ENCODE measurements at regions of chr12 and their contacts with region 1.

Region 1: DNA sequence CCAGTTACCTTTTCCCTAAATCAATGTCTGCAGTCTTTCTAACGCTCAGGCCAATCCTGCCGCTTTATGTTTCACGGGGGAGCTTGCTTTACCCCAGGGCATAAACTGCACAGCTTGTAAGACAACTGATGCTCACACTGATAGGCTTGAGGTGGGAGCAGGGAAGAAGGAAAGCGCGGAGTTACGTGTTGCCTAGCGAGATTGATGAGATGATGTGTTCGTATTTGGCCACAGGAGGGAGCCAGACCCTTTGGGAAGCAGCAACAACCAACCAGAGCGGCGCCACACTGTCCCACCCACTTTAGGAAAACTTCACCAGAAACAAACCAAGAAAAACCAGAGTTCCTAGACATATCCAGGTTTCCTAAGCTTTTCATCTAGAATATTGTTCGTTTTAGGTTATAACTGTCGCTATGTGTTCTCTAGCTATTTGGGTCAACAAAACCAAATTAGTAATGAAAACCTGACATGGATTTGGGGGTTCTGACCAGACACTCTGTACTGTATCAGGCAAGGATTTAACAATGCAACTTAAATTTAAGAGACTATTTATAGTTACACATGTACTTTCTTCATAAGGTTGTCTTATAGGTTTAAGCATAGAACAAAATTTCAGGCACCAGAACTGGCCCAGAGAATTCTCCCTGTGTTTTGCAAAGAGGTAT is 2.4 kb downstream of the IL26 start:
- DNase-seq: peak; percentile 55 to 81
- ATAC-seq: peak; percentile 91 to 99 (median 98)
- H3K4me3 ChIP-seq: peak overlapping the region in 1 of 10 donors; percentile 13
- H3K27ac ChIP-seq: peak overlapping the region in 1 of 10 donors; percentile 15
- H3K4me1 ChIP-seq: peaks cover 0 to 18% (median 3%) of the 10 kb centered on the region in 9 donors
- H3K27me3 ChIP-seq: peaks cover 0 to 11% (median 0%) of the 10 kb centered on the region in 7 donors
- CTCF ChIP-seq: peak; percentile 73 to 90 (median 85)

Region 2: GRCh38 chr12:68310370-68310769 is 87.2 kb after region 1 on chr12:
- intact Hi-C with region 1: loop called in 3 of 10 experiments (anchors 5 kb)
- DNase-seq: no peak
- ATAC-seq: no peak
- H3K4me3 ChIP-seq: no peak overlapping the region
- H3K27ac ChIP-seq: no peak overlapping the region
- H3K4me1 ChIP-seq: no peaks in the 10 kb centered on the region
- H3K27me3 ChIP-seq: no peaks in the 10 kb centered on the region
- CTCF ChIP-seq: no peak

Region 3: DNA sequence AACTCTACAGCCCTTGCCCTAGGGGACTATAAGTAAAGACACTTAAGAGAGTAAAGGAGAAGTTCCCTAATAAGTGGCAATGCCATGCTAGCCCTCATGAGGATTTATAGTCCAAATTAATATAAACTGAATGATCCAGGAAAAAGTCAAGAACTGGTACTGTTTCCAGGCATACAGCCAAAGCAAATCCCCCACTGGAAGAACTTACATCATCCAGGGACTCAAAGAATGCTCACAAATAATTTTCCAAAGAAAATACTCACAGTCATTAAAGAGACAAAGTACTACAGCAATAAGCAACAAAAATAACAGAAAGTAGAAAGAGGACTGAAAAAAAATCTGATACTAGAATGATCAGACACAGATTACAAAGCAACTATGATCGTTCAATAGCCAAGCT is 307.8 kb after region 1 on chr12:
- intact Hi-C with region 1: no loop called
- DNase-seq: peak in 1 of 2 donors; percentile 58
- ATAC-seq: peak in 6 of 8 donors; percentile 67 to 83 (median 72)
- H3K4me3 ChIP-seq: no peak overlapping the region
- H3K27ac ChIP-seq: peak overlapping the region in 6 of 10 donors; percentile 1 to 52 (median 30)
- H3K4me1 ChIP-seq: peaks cover 0 to 20% (median 6%) of the 10 kb centered on the region in 9 donors
- H3K27me3 ChIP-seq: no peaks in the 10 kb centered on the region
- CTCF ChIP-seq: no peak

Region 4: GRCh38 chr12:68617160-68617926 is 394.1 kb after region 1 on chr12:
- intact Hi-C with region 1: no loop called
- DNase-seq: no peak
- ATAC-seq: peak in 1 of 8 donors; percentile 36
- H3K4me3 ChIP-seq: no peak overlapping the region
- H3K27ac ChIP-seq: peak overlapping the region in 1 of 10 donors; percentile 3
- H3K4me1 ChIP-seq: peaks cover 7 to 100% (median 97%) of the 10 kb centered on the region in 9 donors
- H3K27me3 ChIP-seq: no peaks in the 10 kb centered on the region
- CTCF ChIP-seq: no peak

Measured in heart right ventricle (tissue), 16 donors.